Ascending aorta (tissue), 2 donors: ENCODE measurements at regions of chr3 and their contacts with region 1.

Region 1: GRCh38 chr3:72041511-72041910 is 256.6 kb upstream of the PROK2 start:
- DNase-seq: no peak
- H3K4me3 ChIP-seq: no peak overlapping the region
- H3K27ac ChIP-seq: no peak overlapping the region
- H3K4me1 ChIP-seq: peaks cover 0 to 6% of the 10 kb centered on the region in 2 donors
- H3K27me3 ChIP-seq: no peaks in the 10 kb centered on the region
- CTCF ChIP-seq: no peak

Region 2: DNA sequence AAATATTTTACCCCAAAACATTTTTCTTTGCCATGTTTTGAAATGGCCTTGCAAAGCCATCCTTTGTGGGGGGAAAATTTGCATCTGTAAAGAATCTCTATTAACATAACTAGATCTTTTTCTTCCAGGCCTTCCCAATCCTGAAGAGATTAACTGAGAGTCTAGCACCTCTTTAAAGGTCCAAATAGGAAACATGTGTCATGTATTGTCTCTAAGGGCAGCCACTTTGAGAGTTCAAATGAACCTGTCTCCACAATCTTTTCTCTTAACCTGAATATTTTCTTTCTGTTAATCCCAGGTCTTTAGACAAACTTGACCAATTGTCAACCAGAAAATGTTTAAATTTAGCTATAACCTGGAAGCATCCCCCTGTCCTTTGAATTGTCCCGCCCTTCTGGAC is 20.0 kb before region 1 on chr3:
- intact Hi-C with region 1: no loop called
- DNase-seq: no peak
- H3K4me3 ChIP-seq: no peak overlapping the region
- H3K27ac ChIP-seq: no peak overlapping the region
- H3K4me1 ChIP-seq: no peaks in the 10 kb centered on the region
- H3K27me3 ChIP-seq: no peaks in the 10 kb centered on the region
- CTCF ChIP-seq: no peak

Region 3: GRCh38 chr3:72458358-72458757 is 416.8 kb after region 1 on chr3:
- intact Hi-C with region 1: loop called (anchors 10 kb)
- DNase-seq: no peak
- H3K4me3 ChIP-seq: no peak overlapping the region
- H3K27ac ChIP-seq: no peak overlapping the region
- H3K4me1 ChIP-seq: no peaks in the 10 kb centered on the region
- H3K27me3 ChIP-seq: no peaks in the 10 kb centered on the region
- CTCF ChIP-seq: no peak